Esophagus muscularis mucosa (tissue), 4 donors: ENCODE measurements at regions of chr15 and their contacts with region 1.

Region 1: GRCh38 chr15:38440353-38441129 is 13.4 kb upstream of the FAM98B start:
- DNase-seq: no peak
- H3K4me3 ChIP-seq: no peak overlapping the region
- H3K27ac ChIP-seq: no peak overlapping the region
- H3K4me1 ChIP-seq: peaks cover 0 to 9% (median 6%) of the 10 kb centered on the region in 4 donors
- H3K27me3 ChIP-seq: peaks cover 0 to 7% (median 0%) of the 10 kb centered on the region in 4 donors
- CTCF ChIP-seq: peak; percentile 87 to 96 (median 89)
- EP300 ChIP-seq: no peak
- POLR2A ChIP-seq: no peak

Region 2: GRCh38 chr15:38471974-38472373 is 31.4 kb after region 1 on chr15:
- intact Hi-C with region 1: no loop called
- DNase-seq: no peak
- H3K4me3 ChIP-seq: no peak overlapping the region
- H3K27ac ChIP-seq: no peak overlapping the region
- H3K4me1 ChIP-seq: no peaks in the 10 kb centered on the region
- H3K27me3 ChIP-seq: no peaks in the 10 kb centered on the region
- CTCF ChIP-seq: no peak
- EP300 ChIP-seq: no peak
- POLR2A ChIP-seq: no peak

Region 3: DNA sequence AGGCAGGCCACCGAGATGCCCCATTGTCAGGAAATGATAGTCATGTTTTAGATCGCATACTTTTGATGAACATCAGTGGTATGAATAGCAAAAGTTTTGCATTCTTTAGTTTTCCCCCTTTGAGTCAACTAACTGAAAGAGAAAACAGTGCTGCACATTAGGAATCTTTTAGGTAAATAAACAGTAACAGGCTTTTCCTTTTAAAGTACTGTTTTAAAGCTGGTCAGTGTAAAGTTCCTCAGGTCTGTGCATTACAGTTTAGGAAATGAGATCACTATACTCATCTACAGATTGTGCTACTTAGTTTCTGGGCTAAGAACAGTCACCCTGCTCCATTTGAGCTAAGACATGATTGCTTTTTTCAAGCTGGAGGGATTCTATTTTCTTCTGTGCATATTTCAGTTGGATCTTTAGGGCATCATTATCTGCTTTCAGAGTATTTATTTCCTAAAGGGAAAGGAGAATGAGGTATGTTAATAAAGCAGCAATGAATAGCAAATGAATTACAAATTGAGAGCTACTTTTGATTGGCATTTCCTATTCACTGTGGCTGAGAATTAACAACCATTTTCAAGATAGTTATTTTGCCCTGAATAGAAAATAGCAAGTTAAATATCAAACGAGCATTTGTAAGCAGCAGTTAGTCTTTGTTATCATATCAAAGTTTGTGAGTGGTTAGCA is 49.8 kb after region 1 on chr15:
- intact Hi-C with region 1: no loop called
- DNase-seq: no peak
- H3K4me3 ChIP-seq: no peak overlapping the region
- H3K27ac ChIP-seq: no peak overlapping the region
- H3K4me1 ChIP-seq: peaks cover 0 to 7% (median 3%) of the 10 kb centered on the region in 4 donors
- H3K27me3 ChIP-seq: no peaks in the 10 kb centered on the region
- CTCF ChIP-seq: no peak
- EP300 ChIP-seq: no peak
- POLR2A ChIP-seq: no peak

Region 4: DNA sequence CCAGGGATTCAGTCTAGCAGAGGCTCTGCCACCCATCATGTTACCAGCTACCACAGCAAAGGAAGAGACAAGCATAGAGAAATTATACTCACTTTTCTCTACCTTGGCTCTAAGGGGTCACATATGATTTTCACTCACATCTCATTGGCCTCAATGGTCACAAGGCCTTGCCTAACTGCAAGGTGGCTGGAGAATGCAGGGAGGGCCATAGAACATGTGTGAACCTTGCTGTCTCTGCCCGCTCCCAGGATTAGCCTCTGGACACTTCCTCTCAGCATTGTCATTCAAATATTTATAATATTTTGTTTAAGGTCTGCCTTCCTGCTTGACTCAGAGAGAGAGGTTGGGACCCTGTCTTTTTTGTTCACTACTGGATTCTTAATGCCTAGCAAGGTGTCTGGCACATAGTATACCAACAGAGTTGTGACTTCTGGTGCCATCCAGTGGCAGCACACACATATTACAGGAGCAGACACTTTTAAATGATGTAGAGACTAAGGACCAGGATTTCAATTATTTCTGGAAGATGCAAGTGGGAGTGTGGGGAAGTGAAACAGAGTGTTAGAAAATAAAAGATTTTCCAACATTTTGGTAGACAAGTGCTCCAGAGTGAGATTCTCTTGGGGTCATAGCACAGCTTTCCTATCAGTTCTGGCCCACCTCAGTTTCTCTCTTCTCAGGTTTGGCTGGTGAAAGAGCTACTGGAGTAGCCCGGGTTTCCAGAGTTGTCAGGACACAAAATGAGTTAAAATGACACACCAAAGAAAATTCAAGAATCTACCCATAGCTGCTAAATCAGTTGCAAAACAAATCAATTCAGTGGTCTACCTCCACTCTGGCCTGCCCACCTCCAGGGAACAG is 243.1 kb after region 1 on chr15:
- intact Hi-C with region 1: loop called (anchors 5 kb)
- DNase-seq: no peak
- H3K4me3 ChIP-seq: no peak overlapping the region
- H3K27ac ChIP-seq: no peak overlapping the region
- H3K4me1 ChIP-seq: no peaks in the 10 kb centered on the region
- H3K27me3 ChIP-seq: no peaks in the 10 kb centered on the region
- CTCF ChIP-seq: peak; percentile 61 to 78 (median 63)
- EP300 ChIP-seq: no peak
- POLR2A ChIP-seq: no peak

Region 5: DNA sequence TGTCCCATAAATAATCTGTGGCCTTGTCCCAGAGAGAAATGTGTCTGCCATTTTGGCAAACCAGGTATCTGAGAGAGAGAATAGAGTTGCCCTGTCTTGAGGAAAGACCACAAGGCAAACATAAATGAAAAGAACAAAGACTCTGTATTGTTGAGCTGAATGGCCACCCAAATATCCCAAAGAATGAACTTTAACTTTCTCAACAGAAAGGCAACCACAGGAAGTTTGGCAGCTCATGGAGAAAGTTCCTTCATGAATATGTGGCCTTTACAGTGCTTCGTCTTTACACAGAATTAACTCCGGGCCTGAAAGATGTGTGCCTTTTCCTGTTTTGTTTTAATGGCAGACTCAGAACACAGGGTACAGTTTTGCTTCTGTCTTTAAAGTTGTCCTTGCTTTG is 1098.9 kb after region 1 on chr15:
- intact Hi-C with region 1: no loop called
- DNase-seq: peak; percentile 34
- H3K4me3 ChIP-seq: no peak overlapping the region
- H3K27ac ChIP-seq: peak overlapping the region in 3 of 4 donors; percentile 1 to 49 (median 1)
- H3K4me1 ChIP-seq: peaks cover 7 to 16% (median 11%) of the 10 kb centered on the region in 4 donors
- H3K27me3 ChIP-seq: no peaks in the 10 kb centered on the region
- CTCF ChIP-seq: no peak
- EP300 ChIP-seq: no peak
- POLR2A ChIP-seq: no peak